ENCODE measurements at regions of chr12 and their contacts with region 1.

Region 1: DNA sequence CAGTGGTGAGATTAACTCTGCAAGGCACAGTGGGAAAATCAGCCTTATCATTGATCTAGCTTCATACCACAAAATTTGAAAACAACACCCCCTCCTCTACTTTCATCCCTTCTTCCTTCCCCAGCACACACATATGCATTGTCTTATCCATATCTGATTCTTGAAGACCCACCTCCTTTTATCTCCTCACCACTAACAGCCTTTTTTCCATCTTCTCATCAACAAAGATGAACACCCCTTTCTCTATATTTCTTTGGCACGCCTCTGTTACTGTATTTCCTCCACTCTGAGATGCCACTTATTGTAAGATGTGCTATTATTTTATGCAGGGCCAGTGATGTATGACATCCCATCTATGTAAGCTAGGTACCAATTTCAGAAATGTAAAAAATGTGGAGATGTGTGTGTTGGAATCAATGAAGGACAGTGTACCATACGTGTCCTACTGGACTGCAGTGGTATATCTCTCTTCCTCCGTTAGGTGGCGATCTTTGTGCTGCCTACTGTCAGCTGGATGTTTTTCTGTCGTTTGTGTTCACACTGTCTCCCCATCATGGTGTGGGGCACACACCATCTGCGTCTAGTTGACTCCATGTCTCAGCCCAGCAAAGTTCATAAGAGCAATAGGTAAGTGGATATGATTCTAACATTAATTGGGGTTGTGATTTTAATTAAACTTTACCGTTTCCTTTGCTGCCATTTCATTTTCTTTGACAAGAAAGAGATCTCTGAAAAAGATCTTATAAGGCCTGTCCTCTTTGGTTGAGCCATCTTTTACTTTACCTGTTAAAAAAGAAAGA is 24.0 kb downstream of the CCDC38 start:
- DNase-seq: peak; percentile 37
- ATAC-seq: peak; percentile 99
- H3K4me3 ChIP-seq: no peak overlapping the region
- H3K27ac ChIP-seq: no peak overlapping the region
- H3K4me1 ChIP-seq: no peaks in the 10 kb centered on the region
- H3K27me3 ChIP-seq: no peaks in the 10 kb centered on the region
- CTCF ChIP-seq: peak; percentile 82 to 94 (median 88)
- POLR2A ChIP-seq: no peak
- RAD21 ChIP-seq: peak; percentile 88

Region 2: GRCh38 chr12:95959107-95959506 is 40.7 kb after region 1 on chr12:
- CTCF ChIA-PET with region 1: interaction called, 10 read pairs
- POLR2A ChIA-PET with region 1: no interaction called
- RAD21 ChIA-PET with region 1: interaction called, 3 to 4 read pairs
- intact Hi-C with region 1: loop called (anchors 2 kb)
- DNase-seq: peak; percentile 29
- ATAC-seq: peak; percentile 84
- H3K4me3 ChIP-seq: no peak overlapping the region
- H3K27ac ChIP-seq: no peak overlapping the region
- H3K4me1 ChIP-seq: no peaks in the 10 kb centered on the region
- H3K27me3 ChIP-seq: no peaks in the 10 kb centered on the region
- CTCF ChIP-seq: peak in 2 of 3 experiments; percentile 36 to 41; a peak in 3 of 6 replicates
- POLR2A ChIP-seq: no peak
- RAD21 ChIP-seq: peak; percentile 70

Region 3: GRCh38 chr12:95998611-95999286 is 80.4 kb after region 1 on chr12:
- CTCF ChIA-PET with region 1: interaction called, 20 read pairs
- POLR2A ChIA-PET with region 1: no interaction called
- RAD21 ChIA-PET with region 1: interaction called in 1 of 2 experiments, 3 read pairs
- intact Hi-C with region 1: loop called (anchors 2 kb)
- DNase-seq: peak; percentile 35
- ATAC-seq: peak; percentile 96
- H3K4me3 ChIP-seq: no peak overlapping the region
- H3K27ac ChIP-seq: no peak overlapping the region
- H3K4me1 ChIP-seq: no peaks in the 10 kb centered on the region
- H3K27me3 ChIP-seq: no peaks in the 10 kb centered on the region
- CTCF ChIP-seq: peak; percentile 62 to 80 (median 72)
- POLR2A ChIP-seq: no peak
- RAD21 ChIP-seq: peak; percentile 73